Tibial artery (tissue), 4 donors: ENCODE measurements at regions of chr12 and their contacts with region 1.

Region 1: GRCh38 chr12:124767066-124767821 is 96.4 kb downstream of the SCARB1 start:
- DNase-seq: peak; percentile 66 to 87
- H3K4me3 ChIP-seq: no peak overlapping the region
- H3K27ac ChIP-seq: peak overlapping the region in 1 of 2 donors; percentile 68
- H3K4me1 ChIP-seq: peaks cover 8 to 56% (median 47%) of the 10 kb centered on the region in 4 donors
- H3K27me3 ChIP-seq: peaks cover 0 to 4% of the 10 kb centered on the region in 2 donors
- CTCF ChIP-seq: peak; percentile 99

Region 2: GRCh38 chr12:124036674-124037109 is 730.6 kb before region 1 on chr12:
- intact Hi-C with region 1: loop called (anchors 2 kb)
- DNase-seq: no peak
- H3K4me3 ChIP-seq: no peak overlapping the region
- H3K27ac ChIP-seq: no peak overlapping the region
- H3K4me1 ChIP-seq: peaks cover 0 to 4% (median 0%) of the 10 kb centered on the region in 4 donors
- H3K27me3 ChIP-seq: no peaks in the 10 kb centered on the region
- CTCF ChIP-seq: peak; percentile 90 to 92

Region 3: GRCh38 chr12:124327362-124328043 is 439.7 kb before region 1 on chr12:
- intact Hi-C with region 1: loop called (anchors 5 kb)
- DNase-seq: peak in 1 of 2 donors; percentile 85
- H3K4me3 ChIP-seq: peak overlapping the region in 1 of 2 donors; percentile 16
- H3K27ac ChIP-seq: peak overlapping the region; percentile 74 to 82
- H3K4me1 ChIP-seq: peaks cover 0 to 27% (median 26%) of the 10 kb centered on the region in 4 donors
- H3K27me3 ChIP-seq: no peaks in the 10 kb centered on the region
- CTCF ChIP-seq: no peak

Region 4: GRCh38 chr12:124388679-124389536 is 378.3 kb before region 1 on chr12:
- intact Hi-C with region 1: loop called (anchors 10 kb)
- DNase-seq: peak; percentile 92 to 97
- H3K4me3 ChIP-seq: peak overlapping the region; percentile 59 to 64
- H3K27ac ChIP-seq: peak overlapping the region; percentile 90 to 96
- H3K4me1 ChIP-seq: peaks cover 10 to 95% (median 86%) of the 10 kb centered on the region in 4 donors
- H3K27me3 ChIP-seq: no peaks in the 10 kb centered on the region
- CTCF ChIP-seq: peak in 1 of 2 experiments; percentile 11

Region 5: GRCh38 chr12:124636138-124636978 is 130.9 kb before region 1 on chr12:
- intact Hi-C with region 1: no loop called
- DNase-seq: peak in 1 of 2 donors; percentile 47
- H3K4me3 ChIP-seq: no peak overlapping the region
- H3K27ac ChIP-seq: no peak overlapping the region
- H3K4me1 ChIP-seq: peaks cover 0 to 17% (median 9%) of the 10 kb centered on the region in 4 donors
- H3K27me3 ChIP-seq: no peaks in the 10 kb centered on the region
- CTCF ChIP-seq: no peak